Panc1 (cell line): ENCODE measurements at regions of chr6 and their contacts with region 1.

Region 1: DNA sequence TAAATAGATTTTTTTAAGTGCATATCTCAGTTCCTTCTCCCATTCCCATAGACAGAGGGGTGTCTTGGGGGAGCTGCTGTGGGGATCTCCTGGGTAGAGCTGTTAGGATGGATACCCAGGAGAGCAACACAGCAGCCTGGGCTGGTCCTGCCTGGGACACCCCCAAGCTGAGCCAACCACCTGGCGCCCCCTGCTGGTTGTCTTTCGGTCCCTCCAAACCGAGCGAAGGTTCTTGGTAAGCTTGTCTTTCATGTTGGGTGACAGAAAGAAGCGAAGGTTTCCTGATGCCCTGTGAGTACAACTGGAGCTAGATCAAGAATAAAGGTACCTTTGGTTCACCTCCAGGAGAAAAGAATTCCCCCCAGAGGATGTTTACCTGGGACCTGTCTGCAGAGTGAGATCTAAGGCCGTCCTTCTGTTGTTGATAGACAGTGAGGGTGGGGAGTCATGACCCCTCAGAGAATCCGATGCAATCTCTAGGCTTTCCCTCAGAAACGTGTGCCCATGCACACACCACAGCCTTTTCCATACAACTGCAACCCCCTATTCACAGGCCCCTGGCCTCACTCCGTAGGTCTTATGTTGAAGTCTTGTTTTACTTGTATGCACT is 50.8 kb downstream of the SNX9 start:
- DNase-seq: peak; percentile 48
- ATAC-seq: peak; percentile 93
- H3K4me3 ChIP-seq: no peak overlapping the region
- H3K27ac ChIP-seq: no peak overlapping the region
- H3K4me1 ChIP-seq: peaks cover 10% of the 10 kb centered on the region; the same call in 1 of the 2 replicates
- H3K27me3 ChIP-seq: no peaks in the 10 kb centered on the region
- CTCF ChIP-seq: peak; percentile 91

Region 2: DNA sequence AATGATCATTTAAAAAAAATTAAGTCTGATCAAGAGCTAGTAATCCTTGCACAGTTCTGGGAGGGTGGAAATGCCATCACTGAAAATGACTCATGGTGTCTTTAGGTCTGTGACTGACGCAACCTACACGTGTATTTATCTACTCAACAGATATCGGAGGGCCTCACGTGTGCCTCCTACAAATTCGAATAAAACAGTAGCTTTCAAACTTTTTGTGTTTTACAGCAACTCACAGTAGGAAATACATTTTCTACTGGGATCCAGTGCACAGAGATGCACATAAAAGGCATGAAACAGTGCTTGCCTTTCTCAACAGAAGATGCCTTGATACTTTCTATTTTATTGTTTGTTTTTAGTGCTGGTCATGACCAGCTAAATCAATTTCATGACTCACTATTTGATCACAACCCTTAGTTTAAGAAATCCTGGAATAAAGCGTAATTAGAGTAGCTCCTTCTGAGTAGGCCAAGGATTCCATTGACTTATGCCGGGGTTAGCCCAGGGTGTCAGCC is 260.8 kb before region 1 on chr6:
- CTCF ChIA-PET with region 1: interaction called, 11 read pairs
- POLR2A ChIA-PET with region 1: no interaction called
- in situ Hi-C with region 1: no loop called
- intact Hi-C with region 1: no loop called
- DNase-seq: peak; percentile 94
- ATAC-seq: peak; percentile 90
- H3K4me3 ChIP-seq: peak overlapping the region in 1 of 2 experiments; percentile 40; a peak in 2 of 4 replicates
- H3K27ac ChIP-seq: peak overlapping the region; percentile 78; the same call in 1 of the 2 replicates
- H3K4me1 ChIP-seq: peaks cover 38% of the 10 kb centered on the region
- H3K27me3 ChIP-seq: no peaks in the 10 kb centered on the region
- CTCF ChIP-seq: no peak

Region 3: DNA sequence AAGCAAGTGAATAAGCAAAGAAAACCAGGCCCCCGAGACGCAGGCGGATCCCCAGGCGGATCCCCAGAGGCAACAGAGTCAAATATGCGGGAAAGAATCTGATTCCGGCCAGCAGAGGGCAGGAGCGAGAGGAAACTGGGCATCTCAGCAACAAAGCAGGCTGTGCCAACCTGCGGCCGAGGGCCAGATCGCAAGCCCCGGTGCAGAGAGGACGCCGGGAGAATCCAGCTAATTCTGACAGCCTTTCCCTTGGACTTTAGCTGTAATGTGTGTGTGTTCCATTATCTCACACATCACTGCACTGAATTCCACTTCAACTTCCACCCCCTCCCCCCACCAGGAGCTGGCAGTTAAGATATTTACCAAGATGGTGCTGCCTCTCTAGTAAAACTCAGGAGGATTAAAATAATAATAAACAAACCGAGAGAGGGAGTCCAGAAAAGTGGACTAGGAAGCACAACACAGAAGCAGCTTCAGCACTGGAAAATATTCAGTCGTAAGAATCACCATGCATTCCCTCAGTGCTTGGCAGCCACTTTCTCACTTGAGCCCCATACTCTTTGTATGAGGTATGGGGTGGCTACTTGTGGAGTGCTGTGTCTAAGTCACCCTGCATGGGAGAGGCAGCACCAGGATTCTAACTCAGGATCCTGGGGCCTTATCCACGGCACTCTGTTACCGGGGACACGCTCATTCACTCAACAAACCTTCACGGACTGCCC is 117.0 kb before region 1 on chr6:
- CTCF ChIA-PET with region 1: interaction called, 22 read pairs
- POLR2A ChIA-PET with region 1: no interaction called
- in situ Hi-C with region 1: loop called (anchors 25 kb)
- intact Hi-C with region 1: loop called (anchors 2 kb)
- DNase-seq: peak; percentile 72
- ATAC-seq: peak; percentile 81
- H3K4me3 ChIP-seq: peak overlapping the region in 1 of 2 experiments; percentile 23; a peak in 2 of 4 replicates
- H3K27ac ChIP-seq: peak overlapping the region; percentile 65
- H3K4me1 ChIP-seq: peaks cover 47% of the 10 kb centered on the region
- H3K27me3 ChIP-seq: no peaks in the 10 kb centered on the region
- CTCF ChIP-seq: peak; percentile 95

Region 4: DNA sequence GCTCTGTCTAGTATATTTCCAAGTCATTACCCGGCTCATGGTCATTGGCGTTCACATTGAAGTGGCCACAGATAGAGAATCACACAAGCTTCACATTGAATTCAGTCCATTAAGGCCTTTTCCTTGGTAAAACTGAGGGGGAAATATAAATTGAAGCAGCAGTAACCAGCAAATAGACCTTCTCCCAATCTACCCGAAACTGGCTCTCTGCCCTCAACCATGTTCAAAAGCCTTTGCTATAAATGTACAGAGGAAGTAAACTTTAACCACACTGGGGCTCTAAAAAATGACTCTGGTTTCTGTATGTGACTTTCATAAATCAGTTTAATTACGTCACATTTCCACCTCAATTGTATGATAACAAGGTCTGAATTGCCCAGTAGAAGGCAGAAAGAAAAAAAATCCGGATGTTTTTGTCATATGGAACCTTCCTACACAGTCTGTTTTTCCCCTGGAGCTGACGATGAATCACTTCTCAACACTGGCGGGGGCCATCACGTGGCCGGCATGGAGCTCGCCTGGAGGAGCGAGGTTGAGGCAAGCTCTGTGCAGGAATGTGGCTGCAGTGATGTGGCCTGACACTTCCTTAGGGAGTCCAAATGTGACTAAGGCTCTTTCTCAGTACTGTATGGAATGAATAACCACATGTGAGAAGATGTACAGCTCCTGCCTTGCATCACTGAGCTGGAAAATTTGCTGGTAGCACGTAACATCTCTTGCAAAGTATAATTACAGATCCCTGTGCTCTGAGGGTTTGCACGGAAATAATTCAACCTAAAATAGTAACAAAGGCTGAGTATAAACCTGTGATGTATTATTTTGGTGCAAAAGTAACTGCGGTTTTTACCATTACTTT is 109.4 kb before region 1 on chr6:
- CTCF ChIA-PET with region 1: interaction called, 5 read pairs
- POLR2A ChIA-PET with region 1: no interaction called
- in situ Hi-C with region 1: loop called (anchors 25 kb)
- intact Hi-C with region 1: loop called (anchors 2 kb)
- DNase-seq: peak; percentile 98
- ATAC-seq: peak; percentile 87
- H3K4me3 ChIP-seq: peak overlapping the region in 1 of 2 experiments; percentile 31; a peak in 2 of 4 replicates
- H3K27ac ChIP-seq: peak overlapping the region; percentile 94
- H3K4me1 ChIP-seq: peaks cover 57% of the 10 kb centered on the region
- H3K27me3 ChIP-seq: no peaks in the 10 kb centered on the region
- CTCF ChIP-seq: no peak

Region 5: GRCh38 chr6:157823001-157823527 is 50.8 kb before region 1 on chr6 and contains the start of gene SNX9:
- CTCF ChIA-PET with region 1: no interaction called
- POLR2A ChIA-PET with region 1: interaction called, 13 read pairs
- in situ Hi-C with region 1: no loop called
- intact Hi-C with region 1: loop called (anchors 2 kb)
- DNase-seq: no peak
- ATAC-seq: peak; percentile 90
- H3K4me3 ChIP-seq: peak within 1 kb of the TSS; percentile 68 to 71
- H3K27ac ChIP-seq: peak within 1 kb of the TSS; percentile 88
- H3K4me1 ChIP-seq: peaks cover 9% of the 10 kb centered on the region
- H3K27me3 ChIP-seq: no peaks in the 10 kb centered on the region
- CTCF ChIP-seq: no peak
- total RNA-seq, gene SNX9: 46.0 TPM